Breast epithelium (tissue), 4 donors: ENCODE measurements at regions of chr11 and their contacts with region 1.

Region 1: GRCh38 chr11:34929794-34930328 is 13.4 kb downstream of the PDHX start:
- DNase-seq: no peak
- H3K4me3 ChIP-seq: no peak overlapping the region
- H3K27ac ChIP-seq: no peak overlapping the region
- H3K4me1 ChIP-seq: peaks cover 0 to 9% of the 10 kb centered on the region in 2 donors
- H3K27me3 ChIP-seq: no peaks in the 10 kb centered on the region
- CTCF ChIP-seq: no peak
- POLR2A ChIP-seq: no peak

Region 2: GRCh38 chr11:35485656-35486322 is 555.9 kb after region 1 on chr11:
- intact Hi-C with region 1: loop called (anchors 10 kb)
- DNase-seq: peak; percentile 65 to 72
- H3K4me3 ChIP-seq: no peak overlapping the region
- H3K27ac ChIP-seq: no peak overlapping the region
- H3K4me1 ChIP-seq: no peaks in the 10 kb centered on the region
- H3K27me3 ChIP-seq: no peaks in the 10 kb centered on the region
- CTCF ChIP-seq: peak; percentile 80 to 88 (median 82)
- POLR2A ChIP-seq: no peak